ENCODE measurements at regions of chr15 and their contacts with region 1.

Region 1: DNA sequence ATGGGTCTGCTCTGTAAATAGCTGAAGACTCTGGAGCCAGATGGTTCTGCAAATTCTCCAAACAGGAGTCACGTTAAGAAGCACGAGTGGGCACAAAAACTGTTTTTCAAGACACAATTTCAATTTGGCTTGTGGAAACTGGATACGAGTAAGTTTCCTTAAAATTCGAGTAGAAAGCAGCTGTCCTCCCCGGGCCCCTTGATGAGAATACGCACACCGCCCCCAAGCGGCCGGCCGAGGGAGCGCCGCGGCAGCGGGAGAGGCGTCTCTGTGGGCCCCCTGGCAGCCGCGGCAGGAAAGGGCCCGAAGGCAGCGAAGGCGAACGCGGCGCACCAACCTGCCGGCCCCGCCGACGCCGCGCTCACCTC is 778 bp upstream of the THBS1 start:
- DNase-seq: peak; percentile 91 to 96 (median 92)
- ATAC-seq: peak; percentile 66 to 83 (median 83)
- H3K4me3 ChIP-seq: peak overlapping the region; percentile 35 to 78 (median 64)
- H3K27ac ChIP-seq: peak overlapping the region; percentile 61 to 97 (median 88)
- H3K4me1 ChIP-seq: peaks cover 0 to 52% (median 25%) of the 10 kb centered on the region in 12 donors
- H3K27me3 ChIP-seq: peaks cover 0 to 4% (median 0%) of the 10 kb centered on the region in 9 donors
- CTCF ChIP-seq: peak; percentile 95 to 99 (median 97)
- POLR2A ChIP-seq: no peak

Region 2: DNA sequence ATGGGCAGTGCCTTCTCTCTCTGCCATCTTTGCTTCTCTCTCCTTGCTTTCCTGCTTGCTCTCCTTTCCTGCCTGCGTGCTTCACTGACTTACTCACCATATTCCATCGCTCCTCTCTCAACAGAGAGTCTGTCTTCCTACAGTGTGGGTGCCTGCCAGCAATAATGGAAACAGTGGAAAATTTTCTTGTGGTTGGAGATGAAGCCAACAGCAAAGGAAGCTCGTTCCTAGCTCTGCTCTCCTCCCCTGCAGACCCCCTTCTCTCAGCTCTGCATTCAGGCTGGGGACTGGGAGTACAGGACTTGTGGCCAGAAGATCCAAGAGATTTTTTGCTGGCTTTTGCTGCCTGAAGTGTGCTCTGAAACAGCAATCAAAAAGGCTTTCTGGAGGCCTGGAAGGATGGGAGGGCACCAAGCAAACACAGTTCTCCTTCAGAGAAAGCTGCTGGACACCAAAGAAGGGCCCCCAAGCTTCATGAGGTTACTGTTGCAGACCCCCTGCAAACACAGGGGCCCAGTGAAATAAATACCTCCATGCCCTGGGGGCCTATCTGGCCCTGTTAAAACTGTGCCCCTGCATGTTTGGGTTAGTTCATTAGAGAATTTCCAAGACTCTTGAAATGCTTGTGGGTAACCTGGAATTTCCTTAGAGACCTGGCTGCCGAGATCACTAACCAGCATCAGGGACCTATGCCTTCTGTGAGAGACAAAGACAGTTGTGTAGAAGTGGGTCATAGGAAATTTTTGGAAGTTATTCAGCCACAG is 865.6 kb before region 1 on chr15:
- intact Hi-C with region 1: loop called in 6 of 10 experiments (anchors 5 to 10 kb)
- DNase-seq: no peak
- ATAC-seq: no peak
- H3K4me3 ChIP-seq: no peak overlapping the region
- H3K27ac ChIP-seq: peak overlapping the region in 1 of 12 donors; percentile 5
- H3K4me1 ChIP-seq: no peaks in the 10 kb centered on the region
- H3K27me3 ChIP-seq: no peaks in the 10 kb centered on the region
- CTCF ChIP-seq: no peak
- POLR2A ChIP-seq: no peak

Region 3: DNA sequence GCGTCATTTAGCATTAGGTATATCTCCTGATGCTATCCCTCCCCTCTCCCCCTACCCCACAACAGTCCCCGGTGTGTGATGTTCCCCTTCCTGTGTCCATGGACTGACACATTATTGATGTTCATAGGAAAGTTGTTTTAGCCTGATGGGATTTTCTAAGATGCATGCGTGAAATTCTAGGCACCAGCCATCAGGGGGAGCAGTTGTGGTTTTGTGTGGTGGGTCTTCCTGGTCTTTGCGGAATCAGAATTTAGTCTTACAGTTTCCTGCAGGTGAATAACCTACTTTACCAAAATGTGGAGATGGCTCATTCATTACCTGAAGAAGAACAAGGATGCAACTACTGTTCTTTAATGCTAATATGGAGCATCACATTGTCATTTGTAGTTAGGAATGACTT is 454.2 kb before region 1 on chr15:
- intact Hi-C with region 1: loop called in 5 of 10 experiments (anchors 2 to 5 kb)
- DNase-seq: no peak
- ATAC-seq: no peak
- H3K4me3 ChIP-seq: no peak overlapping the region
- H3K27ac ChIP-seq: no peak overlapping the region
- H3K4me1 ChIP-seq: peaks cover 0 to 38% (median 16%) of the 10 kb centered on the region in 12 donors
- H3K27me3 ChIP-seq: no peaks in the 10 kb centered on the region
- CTCF ChIP-seq: peak; percentile 34 to 63 (median 53)
- POLR2A ChIP-seq: no peak

Region 4: GRCh38 chr15:39358441-39359041 is 221.6 kb before region 1 on chr15:
- intact Hi-C with region 1: loop called in 1 of 10 experiments (anchors 2 kb)
- DNase-seq: peak in 4 of 5 donors; percentile 31 to 49 (median 44)
- ATAC-seq: peak; percentile 80 to 94 (median 90)
- H3K4me3 ChIP-seq: no peak overlapping the region
- H3K27ac ChIP-seq: peak overlapping the region; percentile 22 to 90 (median 74)
- H3K4me1 ChIP-seq: peaks cover 0 to 36% (median 14%) of the 10 kb centered on the region in 12 donors
- H3K27me3 ChIP-seq: no peaks in the 10 kb centered on the region
- CTCF ChIP-seq: no peak
- POLR2A ChIP-seq: no peak

Region 5: GRCh38 chr15:39488516-39488915 is 91.6 kb before region 1 on chr15:
- intact Hi-C with region 1: loop called in 1 of 10 experiments (anchors 5 kb)
- DNase-seq: peak in 3 of 5 donors; percentile 50 to 61 (median 56)
- ATAC-seq: peak; percentile 52 to 83 (median 71)
- H3K4me3 ChIP-seq: no peak overlapping the region
- H3K27ac ChIP-seq: peak overlapping the region; percentile 5 to 90 (median 57)
- H3K4me1 ChIP-seq: peaks cover 0 to 66% (median 27%) of the 10 kb centered on the region in 12 donors
- H3K27me3 ChIP-seq: no peaks in the 10 kb centered on the region
- CTCF ChIP-seq: no peak
- POLR2A ChIP-seq: no peak

Region 6: GRCh38 chr15:39517122-39517855 is 62.8 kb before region 1 on chr15:
- intact Hi-C with region 1: no loop called
- DNase-seq: no peak
- ATAC-seq: no peak
- H3K4me3 ChIP-seq: no peak overlapping the region
- H3K27ac ChIP-seq: no peak overlapping the region
- H3K4me1 ChIP-seq: peaks cover 0 to 6% (median 0%) of the 10 kb centered on the region in 12 donors
- H3K27me3 ChIP-seq: peaks cover 0 to 6% (median 0%) of the 10 kb centered on the region in 9 donors
- CTCF ChIP-seq: no peak
- POLR2A ChIP-seq: no peak

Region 7: DNA sequence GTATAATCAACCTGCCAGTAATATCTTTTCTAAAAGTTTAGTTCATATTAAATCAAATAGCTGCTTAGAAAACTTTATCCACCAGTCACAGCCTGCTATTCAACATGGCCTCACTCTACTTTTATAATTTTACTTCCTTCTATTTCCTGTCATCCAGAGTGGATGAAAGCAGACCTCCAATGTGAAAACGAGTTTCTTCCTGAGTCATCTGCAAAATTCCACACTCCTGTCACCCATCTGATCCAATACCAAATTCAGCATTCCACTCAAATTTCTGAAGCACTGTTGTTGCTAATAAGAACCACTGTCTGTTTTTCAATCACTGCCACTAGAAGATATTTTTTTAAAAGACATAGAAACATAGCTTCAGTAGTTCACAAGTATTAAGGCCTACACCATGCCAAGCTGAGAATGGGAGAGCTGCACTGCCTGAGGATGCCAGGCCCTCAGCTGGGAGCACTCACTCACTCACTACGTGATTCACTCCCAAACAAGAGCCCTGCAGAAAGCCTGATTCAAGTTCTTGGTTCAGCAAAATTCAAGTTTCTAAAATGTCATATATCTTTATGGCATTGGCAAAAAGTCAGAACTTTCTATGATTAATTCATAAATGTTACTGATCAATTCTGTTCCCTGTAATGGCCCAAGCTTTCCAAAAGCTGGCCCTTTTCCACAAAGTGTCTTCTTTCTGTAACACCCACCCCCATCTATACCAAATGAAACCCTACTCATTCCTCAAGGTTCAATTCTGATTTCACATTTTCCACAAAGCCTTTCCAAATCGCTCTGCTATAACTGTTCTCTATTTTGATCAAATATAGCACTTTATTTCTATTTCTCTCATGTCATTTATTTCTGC is 119.6 kb after region 1 on chr15:
- intact Hi-C with region 1: no loop called
- DNase-seq: no peak
- ATAC-seq: no peak
- H3K4me3 ChIP-seq: no peak overlapping the region
- H3K27ac ChIP-seq: no peak overlapping the region
- H3K4me1 ChIP-seq: no peaks in the 10 kb centered on the region
- H3K27me3 ChIP-seq: no peaks in the 10 kb centered on the region
- CTCF ChIP-seq: no peak
- POLR2A ChIP-seq: no peak

Region 8: DNA sequence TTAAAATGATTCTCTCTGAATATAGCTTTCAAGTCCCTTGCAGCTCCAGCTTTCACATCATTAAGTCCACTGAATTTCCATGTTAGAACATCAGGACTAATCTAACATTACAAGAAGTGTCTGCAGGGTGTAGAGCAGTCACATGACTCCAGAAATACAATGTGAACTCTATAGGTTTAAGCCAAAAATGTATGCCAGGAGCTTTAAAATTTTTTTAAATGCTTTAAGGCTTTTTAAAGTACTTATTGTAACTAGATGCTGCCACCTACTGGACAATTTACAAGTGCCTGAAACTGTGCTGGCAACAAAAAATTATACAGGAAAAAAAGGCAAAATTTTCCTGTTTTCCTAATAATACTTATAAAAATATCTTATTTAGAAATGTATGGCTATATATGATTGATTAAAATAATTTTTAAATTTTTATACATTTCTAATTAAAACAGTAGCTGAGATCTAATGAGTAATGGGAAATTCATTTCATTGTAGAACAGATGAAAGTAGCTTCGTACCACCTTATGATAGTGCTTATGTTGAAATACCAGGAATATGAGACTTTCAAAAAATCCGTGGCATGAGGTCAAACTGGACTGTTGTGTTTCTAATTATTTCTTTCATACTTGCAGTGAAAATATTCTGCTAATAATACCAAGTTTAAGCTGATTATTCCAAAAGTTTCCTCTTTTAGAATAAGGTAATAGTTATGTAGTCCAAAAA is 176.9 kb after region 1 on chr15:
- intact Hi-C with region 1: loop called in 8 of 10 experiments (anchors 5 to 10 kb)
- DNase-seq: no peak
- ATAC-seq: no peak
- H3K4me3 ChIP-seq: no peak overlapping the region
- H3K27ac ChIP-seq: no peak overlapping the region
- H3K4me1 ChIP-seq: no peaks in the 10 kb centered on the region
- H3K27me3 ChIP-seq: no peaks in the 10 kb centered on the region
- CTCF ChIP-seq: peak; percentile 81 to 95 (median 84)
- POLR2A ChIP-seq: no peak

Measured in heart left ventricle (tissue), 16 donors.